ENCODE measurements at regions of chr2 and their contacts with region 1.

Region 1: DNA sequence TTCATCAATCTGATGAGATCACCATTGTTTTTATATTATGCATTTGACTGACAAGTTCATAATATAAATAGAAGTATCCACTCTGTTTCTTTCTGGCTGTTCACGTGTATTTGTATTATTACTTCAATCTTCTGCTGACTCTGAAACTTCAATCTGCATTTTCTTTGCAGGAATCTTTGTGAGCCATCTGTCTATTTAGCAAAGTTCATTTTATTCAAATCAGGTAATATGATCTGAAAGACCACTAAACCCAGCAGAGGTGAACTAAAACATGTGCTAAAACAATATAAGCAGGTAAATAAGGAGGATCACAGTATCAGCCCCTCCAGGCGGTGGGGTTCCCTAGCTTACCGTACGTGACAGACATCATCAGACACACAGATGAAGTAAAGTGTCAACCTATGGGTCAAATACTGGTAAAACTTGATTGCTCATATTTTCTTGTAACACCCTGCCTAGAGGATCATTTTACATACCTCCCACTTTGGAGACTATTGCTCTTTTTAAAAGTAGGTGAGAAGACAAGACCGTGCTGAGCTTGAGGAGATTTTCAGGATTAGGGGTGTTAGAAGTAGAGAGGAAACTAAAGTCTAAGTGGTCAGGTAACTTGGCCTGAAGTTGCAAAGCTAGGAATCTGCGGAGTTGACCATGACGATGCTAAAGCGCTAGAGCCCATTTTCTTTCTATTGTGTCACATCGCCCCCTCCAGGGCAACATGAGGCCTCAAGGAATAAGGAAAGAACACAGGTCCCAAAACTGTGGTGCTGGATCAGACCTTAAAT is 9.0 kb downstream of the DTNB start:
- DNase-seq: no peak
- H3K4me3 ChIP-seq: no peak overlapping the region
- CTCF ChIP-seq: peak; percentile 77

Region 2: GRCh38 chr2:25597881-25598280 is 66.5 kb before region 1 on chr2:
- CTCF ChIA-PET with region 1: interaction called, 11 read pairs
- POLR2A ChIA-PET with region 1: no interaction called
- DNase-seq: no peak
- H3K4me3 ChIP-seq: no peak overlapping the region
- CTCF ChIP-seq: no peak

Region 3: GRCh38 chr2:25618642-25619037 is 45.7 kb before region 1 on chr2:
- CTCF ChIA-PET with region 1: interaction called, 13 read pairs
- POLR2A ChIA-PET with region 1: no interaction called
- DNase-seq: no peak
- H3K4me3 ChIP-seq: no peak overlapping the region
- CTCF ChIP-seq: no peak

Region 4: GRCh38 chr2:25639171-25639570 is 25.2 kb before region 1 on chr2:
- CTCF ChIA-PET with region 1: interaction called, 32 read pairs
- POLR2A ChIA-PET with region 1: no interaction called
- DNase-seq: no peak
- H3K4me3 ChIP-seq: no peak overlapping the region
- CTCF ChIP-seq: no peak

Region 5: DNA sequence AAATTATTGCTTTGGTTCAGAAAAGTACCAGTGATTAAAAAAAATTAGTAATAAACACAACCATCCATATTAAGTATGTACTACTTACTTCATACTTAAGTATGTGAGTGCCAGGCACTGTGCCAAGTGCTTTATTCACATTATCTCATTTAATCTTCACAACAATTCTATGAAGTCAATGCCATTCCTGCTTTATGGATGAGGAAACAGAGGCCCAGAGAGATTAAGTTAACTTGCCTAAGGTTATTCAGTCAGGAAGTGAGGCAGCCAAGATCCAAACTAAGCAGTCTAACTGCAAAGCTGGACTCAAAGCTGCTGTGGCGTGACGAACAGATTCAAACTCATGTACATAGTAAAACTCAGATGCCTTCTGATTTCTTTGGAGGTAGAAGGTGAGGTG is 13.3 kb before region 1 on chr2:
- CTCF ChIA-PET with region 1: interaction called, 32 read pairs
- POLR2A ChIA-PET with region 1: no interaction called
- DNase-seq: peak; percentile 4
- H3K4me3 ChIP-seq: no peak overlapping the region
- CTCF ChIP-seq: no peak

Region 6: DNA sequence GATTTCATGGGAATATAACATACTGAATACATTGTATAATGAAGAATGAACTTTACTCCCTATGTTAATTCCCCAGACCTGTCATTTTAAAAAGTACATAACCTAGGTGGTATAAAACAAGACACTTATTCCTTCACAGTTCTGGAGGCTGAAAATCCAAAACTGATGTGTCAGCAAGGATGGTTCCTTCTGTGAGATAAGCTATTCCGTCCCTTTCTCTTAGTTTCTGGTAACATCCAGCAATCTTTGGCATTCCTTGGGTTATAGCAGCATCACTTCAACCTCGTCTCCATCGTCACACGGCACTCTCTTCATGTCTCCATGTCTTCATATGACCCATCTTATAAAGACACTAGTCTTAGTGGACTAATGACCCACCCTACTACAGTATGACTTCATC is 120.0 kb after region 1 on chr2:
- CTCF ChIA-PET with region 1: no interaction called
- POLR2A ChIA-PET with region 1: no interaction called
- DNase-seq: no peak
- H3K4me3 ChIP-seq: no peak overlapping the region
- CTCF ChIP-seq: no peak